PC-3 (cell line): ENCODE measurements at regions of chr18 and their contacts with region 1.

Region 1: DNA sequence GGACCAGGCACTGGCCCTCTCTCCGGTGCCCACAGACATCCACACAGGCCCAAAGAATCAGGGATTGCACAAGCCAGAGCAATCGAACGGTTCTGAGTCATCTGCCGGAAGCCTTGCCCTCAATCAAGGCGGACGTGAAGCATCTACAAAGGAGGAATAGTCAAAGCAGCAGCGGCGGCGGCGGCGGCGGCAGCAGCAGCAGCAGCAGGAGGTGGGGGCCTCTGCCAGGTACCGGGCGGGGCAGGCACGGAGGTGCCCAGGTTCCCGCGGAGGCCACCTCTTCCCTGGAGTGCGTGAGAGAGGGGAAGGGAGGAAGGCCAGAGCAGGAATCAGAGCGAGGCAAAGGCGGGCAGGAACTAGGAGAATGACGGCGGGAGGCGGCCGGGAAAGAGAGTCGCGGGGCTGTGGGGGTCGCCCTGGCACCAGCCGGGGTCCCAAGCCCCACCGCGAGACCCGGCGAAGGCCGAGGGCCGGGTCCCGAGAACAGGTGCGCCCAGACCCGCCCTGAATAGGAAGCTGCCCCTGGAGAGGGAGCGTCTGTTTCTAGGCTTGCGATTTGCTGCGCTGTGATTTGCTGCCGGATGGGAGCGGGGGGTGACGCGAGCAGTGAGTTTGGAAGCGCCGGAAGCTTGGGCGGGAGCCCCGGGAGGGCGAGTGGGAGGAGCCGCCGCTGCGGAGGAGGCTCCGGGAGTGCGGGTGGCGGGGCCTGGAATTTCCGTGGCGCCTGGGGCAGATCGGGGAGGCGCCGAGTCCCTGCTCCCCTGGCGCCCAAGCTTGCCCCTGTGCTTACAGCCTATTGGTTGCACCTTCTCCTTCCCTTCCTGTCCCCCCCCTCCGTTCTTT is at the start of gene SERPINB8:
- DNase-seq: peak; percentile 92
- ATAC-seq: peak; percentile 91
- H3K4me3 ChIP-seq: peak within 1 kb of the TSS; percentile 99
- H3K27ac ChIP-seq: peak within 1 kb of the TSS; percentile 94
- H3K4me1 ChIP-seq: peaks cover 19% of the 10 kb centered on the region
- H3K27me3 ChIP-seq: no peaks in the 10 kb centered on the region
- CTCF ChIP-seq: no peak
- total RNA-seq, gene SERPINB8: 21.1 and 24.1 TPM in 2 replicates

Region 2: GRCh38 chr18:63410792-63411191 is 559.4 kb before region 1 on chr18:
- CTCF ChIA-PET with region 1: no interaction called
- POLR2A ChIA-PET with region 1: interaction called, 10 read pairs
- intact Hi-C with region 1: no loop called
- DNase-seq: peak; percentile 83
- ATAC-seq: peak; percentile 85
- H3K4me3 ChIP-seq: 0 out of 2 replicates have a peak overlapping the region, but pooled peaks have one; percentile 6
- H3K27ac ChIP-seq: peak overlapping the region; percentile 84
- H3K4me1 ChIP-seq: peaks cover 49% of the 10 kb centered on the region
- H3K27me3 ChIP-seq: no peaks in the 10 kb centered on the region
- CTCF ChIP-seq: no peak

Region 3: GRCh38 chr18:63708650-63709049 is 261.5 kb before region 1 on chr18:
- CTCF ChIA-PET with region 1: no interaction called
- POLR2A ChIA-PET with region 1: no interaction called
- intact Hi-C with region 1: no loop called
- DNase-seq: peak; percentile 29
- ATAC-seq: peak; percentile 37; the same call in 1 of the 2 replicates
- H3K4me3 ChIP-seq: no peak overlapping the region
- H3K27ac ChIP-seq: no peak overlapping the region
- H3K4me1 ChIP-seq: 0 out of 2 replicates have a peak, but pooled peaks cover 4% of the 10 kb centered on the region
- H3K27me3 ChIP-seq: no peaks in the 10 kb centered on the region
- CTCF ChIP-seq: no peak